Posterior vena cava (tissue), 2 donors: ENCODE measurements at regions of chr12 and their contacts with region 1.

Region 1: DNA sequence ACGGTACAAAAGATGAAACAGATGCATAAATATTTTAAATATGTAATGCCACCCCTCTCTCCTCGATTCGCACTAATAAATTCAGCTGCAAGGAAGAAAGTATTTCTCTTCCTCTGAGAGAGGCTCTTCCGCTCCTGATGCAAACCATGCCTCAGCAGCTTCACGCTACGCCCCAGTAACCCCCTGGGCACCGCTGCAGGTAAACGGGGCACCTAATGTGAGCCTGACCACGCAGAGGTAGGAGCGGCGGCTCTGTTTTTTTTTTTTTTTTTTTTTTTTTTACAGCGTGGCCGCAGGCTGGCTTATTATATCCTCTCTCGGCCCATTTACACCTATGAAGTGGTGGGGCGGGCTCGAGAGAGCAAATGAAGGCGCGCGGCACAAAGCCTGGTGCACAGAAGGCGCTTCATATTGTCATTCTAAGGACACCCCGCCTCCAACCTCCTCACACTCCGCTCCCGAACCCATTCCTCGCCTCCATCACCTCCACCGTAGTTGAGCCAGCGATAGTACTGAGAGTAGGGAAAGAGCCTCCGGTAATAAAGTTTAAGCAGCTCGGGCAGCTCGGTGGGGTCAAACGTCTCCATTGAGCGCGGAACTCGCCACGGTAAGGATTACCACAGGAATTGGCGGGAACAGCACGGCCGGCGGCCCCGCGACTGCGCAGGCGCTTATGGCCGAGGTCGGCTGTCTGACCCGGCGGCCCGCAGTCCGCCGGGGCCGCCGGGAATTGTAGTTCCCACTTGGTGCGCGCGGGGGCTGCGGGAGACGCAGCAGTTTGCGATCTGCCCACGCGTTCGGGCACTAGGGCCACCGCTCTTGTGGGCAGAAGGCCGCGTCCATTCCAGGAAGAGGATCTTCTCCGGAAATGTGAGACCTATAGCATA is at the start of gene PRIM1:
- DNase-seq: peak; percentile 94
- total RNA-seq, gene PRIM1: 3.7 to 4.7 TPM

Region 2: GRCh38 chr12:56725723-56726102 is 26.2 kb before region 1 on chr12:
- intact Hi-C with region 1: loop called in 1 of 2 experiments (anchors 1 kb)
- DNase-seq: no peak

Region 3: GRCh38 chr12:57111031-57111734 is 359.2 kb after region 1 on chr12 and contains the start of gene STAT6:
- intact Hi-C with region 1: no loop called
- DNase-seq: peak; percentile 95
- total RNA-seq, gene STAT6: 162 to 201 TPM